HEK293T (cell line): ENCODE measurements at regions of chr5 and their contacts with region 1.

Region 1: DNA sequence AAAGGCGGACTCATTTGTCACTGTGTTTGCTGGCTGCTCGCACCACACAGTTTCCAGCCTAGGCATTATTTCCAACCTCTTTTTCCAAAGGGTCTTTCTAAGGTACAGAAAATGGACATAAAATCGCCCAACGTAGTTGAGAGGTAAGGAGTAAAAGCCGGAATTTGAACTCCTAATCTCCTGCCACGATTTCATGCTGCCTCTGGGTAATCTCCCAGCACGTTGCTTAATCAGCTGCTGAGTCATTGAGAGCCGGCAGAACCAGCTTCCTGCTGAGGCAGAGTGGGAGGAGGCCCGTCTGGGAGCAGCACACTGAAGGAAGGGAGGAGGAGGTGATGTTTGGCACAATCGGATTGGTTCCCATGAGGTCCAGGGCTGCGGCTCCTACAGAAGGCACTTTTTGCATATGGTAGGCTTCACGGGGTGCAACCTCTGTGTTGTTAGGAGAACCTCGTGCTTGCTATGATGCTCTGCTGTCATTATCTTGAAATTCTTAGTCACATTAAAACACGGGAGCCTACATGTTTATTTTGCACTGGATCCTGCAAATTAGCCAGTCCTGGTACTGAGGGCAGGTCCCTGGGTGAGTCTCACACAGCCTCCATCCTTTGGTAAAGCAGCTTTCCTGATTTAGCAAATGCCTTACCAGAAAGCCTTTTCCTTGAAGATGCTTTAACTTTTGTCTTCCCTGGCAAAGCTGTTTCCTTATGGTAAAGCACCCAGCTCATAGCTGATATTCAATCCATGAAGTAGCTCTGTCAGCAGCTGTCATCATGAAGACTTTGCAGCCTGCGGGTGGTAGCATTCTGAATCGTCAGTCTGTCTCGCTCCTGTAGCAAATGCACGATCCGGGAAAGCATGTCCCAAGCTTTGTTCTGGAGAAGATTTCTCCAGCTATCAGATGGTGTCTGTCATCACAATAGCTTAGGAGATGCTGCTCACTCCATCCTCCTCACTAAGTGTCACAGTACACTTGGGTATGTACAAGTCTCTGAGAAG is 191.6 kb upstream of the MSX2 start:
- DNase-seq: peak; percentile 93

Region 2: GRCh38 chr5:174503461-174504265 is 29.1 kb before region 1 on chr5:
- CTCF ChIA-PET with region 1: no interaction called
- POLR2A ChIA-PET with region 1: interaction called, 12 read pairs
- DNase-seq: peak; percentile 66